Activated CD4-positive, alpha-beta T cell treated with anti-CD3 and anti-CD28 coated beads for 36 hours (primary cell): ENCODE measurements at regions of chr16 and their contacts with region 1.

Region 1: DNA sequence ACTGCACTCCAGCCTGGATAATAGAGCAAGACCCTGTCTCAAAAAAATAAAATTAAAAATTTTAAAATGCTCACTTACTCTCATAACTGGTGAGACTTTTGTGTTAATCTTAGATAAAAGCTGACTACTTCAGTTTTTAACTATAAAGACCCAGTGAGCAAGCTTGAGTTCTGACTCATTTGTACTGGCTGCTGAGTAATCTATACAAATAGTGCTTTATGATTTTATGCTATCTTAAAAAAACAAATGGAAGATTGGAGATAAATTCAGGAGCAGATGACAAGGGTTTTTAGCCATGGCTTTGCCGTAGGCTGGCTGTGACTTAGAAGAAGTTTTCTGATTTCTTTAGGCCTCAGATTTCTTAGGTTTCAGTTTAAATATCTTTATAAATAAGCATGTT is 30.5 kb downstream of the SNTB2 start:
- DNase-seq: no peak
- ATAC-seq: peak; percentile 80
- H3K4me3 Mint-ChIP-seq: no peak overlapping the region
- H3K27ac Mint-ChIP-seq: no peak overlapping the region
- H3K4me1 Mint-ChIP-seq: peaks cover 13% of the 10 kb centered on the region
- H3K27me3 Mint-ChIP-seq: no peaks in the 10 kb centered on the region

Region 2: DNA sequence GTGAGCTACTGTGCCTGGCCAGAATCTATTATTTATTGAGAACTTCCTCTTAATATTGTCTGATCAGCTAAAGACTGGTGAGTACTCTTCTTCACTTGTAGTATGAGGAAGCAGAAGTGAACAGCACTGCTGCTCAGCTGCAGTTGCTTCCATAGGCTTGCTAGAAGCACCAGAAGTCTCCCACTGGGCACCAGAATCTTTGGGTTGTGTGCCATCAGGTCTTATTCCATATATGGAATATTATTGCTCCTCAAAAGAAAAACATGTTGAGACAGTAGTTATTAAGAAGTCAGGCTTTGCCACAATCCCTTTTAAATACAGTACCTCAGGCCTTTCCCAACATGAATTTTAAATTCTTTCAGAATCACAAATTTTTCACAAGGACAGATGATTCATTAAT is 13.3 kb before region 1 on chr16:
- CTCF ChIA-PET with region 1: interaction called, 9 read pairs
- POLR2A ChIA-PET with region 1: no interaction called
- intact Hi-C with region 1: loop called in 1 of 2 experiments (anchors 1 kb)
- DNase-seq: no peak
- ATAC-seq: peak; percentile 11
- H3K4me3 Mint-ChIP-seq: no peak overlapping the region
- H3K27ac Mint-ChIP-seq: peak overlapping the region; percentile 55
- H3K4me1 Mint-ChIP-seq: peaks cover 26% of the 10 kb centered on the region
- H3K27me3 Mint-ChIP-seq: no peaks in the 10 kb centered on the region

Region 3: DNA sequence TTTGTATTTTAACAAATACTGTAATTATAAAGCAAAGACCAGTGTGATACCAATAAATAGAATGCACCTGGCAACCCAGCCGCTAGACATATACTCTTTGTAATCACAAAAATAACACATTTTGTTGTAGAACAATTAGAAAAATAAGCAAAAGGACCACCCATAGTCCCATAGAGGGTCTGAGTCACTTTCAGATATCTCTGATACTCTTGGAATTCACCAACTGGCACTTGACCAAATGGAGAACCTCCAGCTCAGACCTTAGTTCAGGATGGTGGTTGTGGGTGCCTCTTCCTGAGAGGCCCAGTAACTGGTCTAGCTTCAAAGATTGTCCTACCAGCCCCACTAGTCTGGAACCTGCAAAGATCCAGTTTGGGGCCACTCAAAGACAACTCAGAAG is 169.2 kb after region 1 on chr16:
- CTCF ChIA-PET with region 1: no interaction called
- POLR2A ChIA-PET with region 1: no interaction called
- intact Hi-C with region 1: no loop called
- DNase-seq: no peak
- ATAC-seq: no peak
- H3K4me3 Mint-ChIP-seq: peak overlapping the region; percentile 100
- H3K27ac Mint-ChIP-seq: peak overlapping the region; percentile 55
- H3K4me1 Mint-ChIP-seq: peaks cover 29% of the 10 kb centered on the region
- H3K27me3 Mint-ChIP-seq: no peaks in the 10 kb centered on the region